ENCODE measurements at regions of chr19 and their contacts with region 1.

Region 1: DNA sequence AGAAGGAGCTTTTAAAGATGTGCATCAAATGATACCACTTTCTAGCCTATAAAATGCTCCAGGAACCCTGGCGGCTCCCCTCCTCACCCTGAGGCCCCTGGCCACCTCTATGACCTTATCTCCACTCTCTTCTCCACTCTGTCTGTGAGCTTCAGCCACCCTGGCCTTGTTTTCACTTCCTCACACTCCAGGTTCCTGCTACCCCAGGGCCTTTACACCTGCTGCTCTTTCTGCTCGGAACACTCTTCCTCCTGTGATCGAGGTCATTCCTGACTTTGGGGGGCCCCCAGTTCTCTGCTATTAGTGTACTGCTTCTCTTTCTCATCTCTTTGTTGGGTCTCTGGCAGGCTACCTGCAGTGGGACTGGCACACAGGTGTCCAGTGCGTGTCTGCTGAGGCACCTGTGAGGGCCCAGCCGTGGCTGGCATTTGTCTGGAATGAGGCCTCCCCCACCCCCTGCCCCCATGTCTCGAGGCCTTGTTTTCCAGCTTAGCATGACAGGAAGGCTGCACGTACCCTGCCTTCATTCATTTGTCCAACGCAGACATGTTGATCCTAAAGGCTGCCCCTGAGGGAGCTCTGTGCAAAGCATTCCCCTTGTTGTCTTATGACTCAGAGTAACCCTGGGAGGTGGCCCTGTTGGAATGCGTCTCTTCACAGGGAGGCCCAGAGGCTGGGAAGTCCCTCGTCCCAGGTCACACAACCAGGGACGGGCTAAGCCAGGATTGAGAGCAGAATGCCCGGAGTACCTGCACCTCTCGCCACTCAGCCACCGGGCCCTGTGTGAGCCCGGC is 2.3 kb downstream of the DDA1 start:
- DNase-seq: peak; percentile 77
- H3K4me3 ChIP-seq: no peak overlapping the region
- H3K27ac ChIP-seq: peak overlapping the region; percentile 70
- H3K4me1 ChIP-seq: peaks cover 30% of the 10 kb centered on the region
- H3K27me3 ChIP-seq: no peaks in the 10 kb centered on the region
- CTCF ChIP-seq: no peak

Region 2: DNA sequence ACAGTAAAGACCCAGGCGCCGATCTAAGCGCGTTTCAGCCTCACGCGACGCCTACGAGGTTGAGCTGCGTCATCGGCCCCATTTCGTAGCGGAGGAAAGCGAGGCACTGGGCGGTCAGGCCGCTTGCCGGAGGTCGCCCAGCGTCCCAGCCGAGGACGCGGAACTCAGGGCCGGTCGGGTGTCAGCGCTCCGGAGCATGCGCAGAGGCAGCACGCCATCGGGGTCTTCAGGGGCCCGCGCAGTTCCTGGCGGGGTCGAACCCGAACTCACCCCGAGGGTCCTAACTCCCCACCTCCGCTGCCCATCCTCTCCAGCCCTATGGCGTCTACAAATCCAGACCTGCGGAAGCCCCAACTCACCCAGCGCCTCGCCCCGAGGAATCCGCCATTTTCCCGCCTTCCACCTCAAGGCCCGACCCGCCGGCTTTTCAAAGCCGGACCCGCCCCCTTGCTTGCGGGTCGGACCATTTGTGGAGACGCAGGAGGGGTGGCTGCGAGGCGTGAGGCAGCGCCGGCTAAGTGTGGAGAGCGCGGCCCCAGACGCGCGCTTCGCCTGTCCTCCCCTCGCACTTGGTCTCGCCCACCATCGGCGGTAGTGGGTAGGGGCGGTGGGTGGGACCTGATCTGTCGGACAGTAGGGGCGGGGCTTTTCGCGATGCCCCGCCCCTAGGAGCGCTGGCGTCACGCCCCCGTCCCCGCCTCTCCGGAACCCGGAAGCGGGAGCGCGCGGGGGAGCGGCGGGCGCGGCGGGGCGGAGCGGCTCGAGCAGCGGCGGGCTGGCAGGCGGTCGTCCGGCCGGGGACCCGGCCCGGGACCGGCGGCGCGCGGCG is 236.4 kb before region 1 on chr19 and contains the starts of genes HAUS8 and MYO9B:
- CTCF ChIA-PET with region 1: no interaction called
- dilution Hi-C with region 1: no loop called
- in situ Hi-C with region 1: no loop called
- intact Hi-C with region 1: no loop called
- DNase-seq: peak; percentile 99
- H3K4me3 ChIP-seq: peak within 1 kb of the TSS; percentile 78 to 92 (median 85)
- H3K27ac ChIP-seq: peak within 1 kb of the TSS; percentile 84
- H3K4me1 ChIP-seq: peaks cover 28% of the 10 kb centered on the region
- H3K27me3 ChIP-seq: no peaks in the 10 kb centered on the region
- CTCF ChIP-seq: no peak
- total RNA-seq, gene HAUS8: 1.2 to 12.5 TPM
- total RNA-seq, gene MYO9B: 61.2 to 64.5 TPM

Region 3: GRCh38 chr19:18322759-18323460 is 1011.3 kb after region 1 on chr19 and contains the start of gene LSM4:
- CTCF ChIA-PET with region 1: interaction called, 11 read pairs
- dilution Hi-C with region 1: no loop called
- in situ Hi-C with region 1: no loop called
- intact Hi-C with region 1: no loop called
- DNase-seq: peak; percentile 98
- H3K4me3 ChIP-seq: peak within 1 kb of the TSS; percentile 73 to 95 (median 82)
- H3K27ac ChIP-seq: peak within 1 kb of the TSS; percentile 82
- H3K4me1 ChIP-seq: peaks cover 16% of the 10 kb centered on the region
- H3K27me3 ChIP-seq: no peaks in the 10 kb centered on the region
- CTCF ChIP-seq: peak; percentile 15 to 61
- total RNA-seq, gene LSM4: 127 to 182 TPM

Measured in mammary epithelial cell (primary cell).